CD4-positive, alpha-beta memory T cell (primary cell): ENCODE measurements at regions of chr1 and their contacts with region 1.

Region 1: GRCh38 chr1:158998781-158999161 is 10.9 kb upstream of the IFI16 start:
- DNase-seq: peak; percentile 63 to 72 (median 71)
- H3K4me3 ChIP-seq: no peak overlapping the region
- H3K4me3 Mint-ChIP-seq: peak overlapping the region in 7 of 8 donors; percentile 64 to 89 (median 76)
- H3K27ac ChIP-seq: no peak overlapping the region
- H3K27ac Mint-ChIP-seq: peak overlapping the region in 5 of 7 donors; percentile 24 to 93 (median 93)
- H3K4me1 ChIP-seq: peaks cover 33% of the 10 kb centered on the region
- H3K4me1 Mint-ChIP-seq: peaks cover 32 to 42% (median 37%) of the 10 kb centered on the region in 4 donors
- H3K27me3 ChIP-seq: no peaks in the 10 kb centered on the region
- H3K27me3 Mint-ChIP-seq: no peaks in the 10 kb centered on the region

Region 2: GRCh38 chr1:158203693-158204457 is 794.9 kb before region 1 on chr1:
- CTCF ChIA-PET with region 1: interaction called, 30 read pairs
- POLR2A ChIA-PET with region 1: no interaction called
- intact Hi-C with region 1: loop called (anchors 1 kb)
- DNase-seq: peak in 4 of 5 donors; percentile 31 to 53 (median 36)
- H3K4me3 ChIP-seq: no peak overlapping the region
- H3K4me3 Mint-ChIP-seq: peak overlapping the region in 1 of 8 donors; percentile 43
- H3K27ac ChIP-seq: no peak overlapping the region
- H3K27ac Mint-ChIP-seq: no peak overlapping the region
- H3K4me1 ChIP-seq: peaks cover 10% of the 10 kb centered on the region
- H3K4me1 Mint-ChIP-seq: peaks cover 7 to 11% (median 9%) of the 10 kb centered on the region in 4 donors
- H3K27me3 ChIP-seq: no peaks in the 10 kb centered on the region
- H3K27me3 Mint-ChIP-seq: peaks cover 13 to 19% of the 10 kb centered on the region in 2 donors

Region 3: GRCh38 chr1:158527190-158527815 is 471.5 kb before region 1 on chr1:
- CTCF ChIA-PET with region 1: no interaction called
- POLR2A ChIA-PET with region 1: no interaction called
- intact Hi-C with region 1: loop called (anchors 1 kb)
- DNase-seq: peak in 3 of 5 donors; percentile 3 to 8 (median 6)
- H3K4me3 ChIP-seq: no peak overlapping the region
- H3K4me3 Mint-ChIP-seq: no peak overlapping the region
- H3K27ac ChIP-seq: no peak overlapping the region
- H3K27ac Mint-ChIP-seq: no peak overlapping the region
- H3K4me1 ChIP-seq: no peaks in the 10 kb centered on the region
- H3K4me1 Mint-ChIP-seq: no peaks in the 10 kb centered on the region
- H3K27me3 ChIP-seq: no peaks in the 10 kb centered on the region
- H3K27me3 Mint-ChIP-seq: peaks cover 10 to 15% of the 10 kb centered on the region in 2 donors

Region 4: DNA sequence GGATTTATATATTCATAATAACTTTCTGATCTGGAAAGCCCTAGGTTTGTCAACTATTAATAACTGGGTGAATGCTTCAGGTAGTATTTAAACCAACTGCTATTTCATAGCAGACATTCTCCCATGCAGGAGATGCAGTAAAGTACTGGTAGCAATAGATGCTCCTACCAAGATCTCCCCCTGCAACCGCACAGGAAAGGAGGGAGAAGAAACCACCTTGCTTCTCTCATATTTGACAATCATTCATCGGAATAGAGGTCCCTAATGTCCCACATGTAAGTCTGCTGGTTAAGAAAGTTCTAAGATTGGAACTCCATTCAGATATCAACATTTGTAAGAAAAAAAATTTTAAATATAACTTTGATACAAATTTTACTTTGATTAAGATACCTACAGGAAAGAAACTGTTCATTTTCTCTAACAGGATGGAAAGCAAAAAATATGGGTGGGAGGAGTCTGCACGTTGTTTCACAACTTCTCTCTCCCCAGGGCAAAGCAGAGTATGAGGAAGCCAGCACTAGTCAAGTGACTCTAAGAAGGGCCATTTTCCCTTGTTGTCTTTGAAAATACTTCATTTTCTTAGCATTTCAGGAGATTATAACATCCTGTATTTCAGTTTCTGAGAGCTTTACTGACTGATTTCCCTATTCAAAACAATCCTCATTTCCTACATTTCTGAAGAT is 67.6 kb before region 1 on chr1 and contains the start of gene PYHIN1:
- CTCF ChIA-PET with region 1: interaction called, 3 read pairs
- POLR2A ChIA-PET with region 1: interaction called, 12 read pairs
- intact Hi-C with region 1: loop called (anchors 1 kb)
- DNase-seq: peak; percentile 52 to 67 (median 57)
- H3K4me3 ChIP-seq: peak within 1 kb of the TSS; percentile 50 to 67
- H3K4me3 Mint-ChIP-seq: peak within 1 kb of the TSS; percentile 97 to 100 (median 99)
- H3K27ac ChIP-seq: peak within 1 kb of the TSS; percentile 62
- H3K27ac Mint-ChIP-seq: peak within 1 kb of the TSS; percentile 83 to 98 (median 96)
- H3K4me1 ChIP-seq: peaks cover 40% of the 10 kb centered on the region
- H3K4me1 Mint-ChIP-seq: peaks cover 31 to 52% (median 37%) of the 10 kb centered on the region in 4 donors
- H3K27me3 ChIP-seq: no peaks in the 10 kb centered on the region
- H3K27me3 Mint-ChIP-seq: no peaks in the 10 kb centered on the region
- total RNA-seq, gene PYHIN1: 83.6 to 93.8 TPM

Region 5: DNA sequence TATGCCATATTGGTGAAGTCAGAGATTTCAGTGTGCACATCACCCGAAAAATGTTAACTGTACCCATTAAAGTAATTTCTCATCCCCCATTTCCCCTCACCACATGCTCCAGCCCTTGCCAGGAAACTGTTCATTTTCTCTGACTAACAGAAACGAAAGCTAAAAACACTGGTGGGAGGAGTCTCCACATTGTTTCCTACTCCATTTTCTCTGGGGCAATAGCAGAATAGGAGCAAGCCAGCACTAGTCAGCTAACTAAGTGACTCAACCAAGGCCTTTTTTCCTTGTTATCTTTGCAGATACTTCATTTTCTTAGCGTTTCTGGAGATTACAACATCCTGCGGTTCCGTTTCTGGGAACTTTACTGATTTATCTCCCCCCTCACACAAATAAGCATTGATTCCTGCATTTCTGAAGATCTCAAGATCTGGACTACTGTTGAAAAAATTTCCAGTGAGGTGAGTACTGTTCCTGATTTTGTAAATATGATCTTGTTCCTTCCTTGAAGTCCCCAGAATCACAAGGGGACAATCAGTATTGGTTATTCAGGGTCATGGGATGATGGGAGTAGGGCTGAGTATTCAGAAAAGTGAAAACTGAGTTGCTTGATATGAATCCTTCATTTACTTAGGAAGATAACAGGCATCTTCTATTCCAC is 11.1 kb after region 1 on chr1 and contains the start of gene IFI16:
- CTCF ChIA-PET with region 1: interaction called, 10 read pairs
- POLR2A ChIA-PET with region 1: interaction called, 27 read pairs
- intact Hi-C with region 1: loop called (anchors 1 kb)
- DNase-seq: peak; percentile 70 to 85 (median 77)
- H3K4me3 ChIP-seq: peak within 1 kb of the TSS; percentile 54 to 97
- H3K4me3 Mint-ChIP-seq: peak within 1 kb of the TSS; percentile 89 to 99 (median 97)
- H3K27ac ChIP-seq: peak within 1 kb of the TSS; percentile 88
- H3K27ac Mint-ChIP-seq: peak within 1 kb of the TSS; percentile 87 to 95 (median 93)
- H3K4me1 ChIP-seq: peaks cover 36% of the 10 kb centered on the region
- H3K4me1 Mint-ChIP-seq: peaks cover 40 to 71% (median 46%) of the 10 kb centered on the region in 4 donors
- H3K27me3 ChIP-seq: no peaks in the 10 kb centered on the region
- H3K27me3 Mint-ChIP-seq: no peaks in the 10 kb centered on the region
- total RNA-seq, gene IFI16: 160 to 162 TPM

Region 6: DNA sequence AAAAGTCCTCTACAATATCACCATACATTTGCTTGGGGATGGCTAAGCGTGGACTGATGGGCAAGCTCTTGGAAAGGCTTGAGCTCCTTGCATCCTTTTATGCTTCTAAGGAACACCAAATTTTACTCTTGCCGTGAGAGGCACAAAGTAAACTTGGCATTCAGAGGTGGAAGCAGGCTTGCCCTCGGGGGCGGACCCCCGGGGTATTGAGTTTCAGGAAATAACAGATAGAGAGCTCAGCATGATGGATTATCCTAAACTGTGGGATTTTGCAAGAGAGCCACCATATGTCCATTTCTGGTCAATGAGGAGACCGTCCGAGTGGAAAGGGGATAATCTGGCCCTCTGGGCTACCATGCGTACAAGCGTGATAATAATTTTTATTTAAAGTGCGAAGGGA is 25.0 kb after region 1 on chr1:
- CTCF ChIA-PET with region 1: no interaction called
- POLR2A ChIA-PET with region 1: no interaction called
- intact Hi-C with region 1: no loop called
- DNase-seq: no peak
- H3K4me3 ChIP-seq: no peak overlapping the region
- H3K4me3 Mint-ChIP-seq: peak overlapping the region in 1 of 8 donors; percentile 29
- H3K27ac ChIP-seq: no peak overlapping the region
- H3K27ac Mint-ChIP-seq: peak overlapping the region in 2 of 7 donors; percentile 25 to 69
- H3K4me1 ChIP-seq: peaks cover 90% of the 10 kb centered on the region
- H3K4me1 Mint-ChIP-seq: peaks cover 64 to 86% (median 75%) of the 10 kb centered on the region in 4 donors
- H3K27me3 ChIP-seq: no peaks in the 10 kb centered on the region
- H3K27me3 Mint-ChIP-seq: no peaks in the 10 kb centered on the region

Region 7: DNA sequence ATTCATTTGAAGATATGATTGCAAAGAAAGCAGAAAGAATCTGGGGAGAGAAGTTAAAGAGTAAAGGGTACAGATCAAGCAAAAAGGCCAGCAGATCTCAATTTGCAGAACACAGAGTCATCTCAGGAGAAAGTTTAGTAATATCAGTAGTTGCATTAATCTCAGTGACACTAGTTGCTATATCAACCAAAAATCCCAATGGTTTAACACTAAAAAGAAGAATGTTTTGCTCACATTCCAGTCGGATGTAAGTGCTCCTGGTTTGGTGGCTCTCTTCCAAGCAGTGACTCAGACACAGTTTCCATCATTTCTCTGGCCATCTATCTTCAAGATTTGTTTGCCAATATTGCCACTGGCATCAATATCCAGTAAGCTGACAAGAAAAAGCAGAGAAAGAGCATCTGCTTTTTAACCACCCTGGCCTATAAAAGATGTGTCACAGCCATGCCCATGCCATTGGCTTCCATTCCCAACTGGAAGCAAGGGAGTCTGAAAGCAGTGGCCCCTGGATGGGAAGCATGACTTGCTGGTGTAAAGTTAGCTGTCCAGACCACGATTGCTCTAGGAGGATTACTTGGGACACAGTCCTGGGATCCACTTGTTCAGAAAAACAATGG is 123.3 kb after region 1 on chr1:
- CTCF ChIA-PET with region 1: no interaction called
- POLR2A ChIA-PET with region 1: no interaction called
- intact Hi-C with region 1: no loop called
- DNase-seq: no peak
- H3K4me3 ChIP-seq: no peak overlapping the region
- H3K4me3 Mint-ChIP-seq: no peak overlapping the region
- H3K27ac ChIP-seq: no peak overlapping the region
- H3K27ac Mint-ChIP-seq: no peak overlapping the region
- H3K4me1 ChIP-seq: no peaks in the 10 kb centered on the region
- H3K4me1 Mint-ChIP-seq: no peaks in the 10 kb centered on the region
- H3K27me3 ChIP-seq: no peaks in the 10 kb centered on the region
- H3K27me3 Mint-ChIP-seq: peaks cover 2 to 7% of the 10 kb centered on the region in 2 donors

Region 8: GRCh38 chr1:159854693-159855192 is 856.0 kb after region 1 on chr1:
- CTCF ChIA-PET with region 1: no interaction called
- POLR2A ChIA-PET with region 1: no interaction called
- intact Hi-C with region 1: no loop called
- DNase-seq: peak; percentile 66 to 75 (median 70)
- H3K4me3 ChIP-seq: peak overlapping the region; percentile 42 to 53
- H3K4me3 Mint-ChIP-seq: peak overlapping the region; percentile 83 to 95 (median 89)
- H3K27ac ChIP-seq: peak overlapping the region; percentile 38
- H3K27ac Mint-ChIP-seq: peak overlapping the region; percentile 33 to 93 (median 84)
- H3K4me1 ChIP-seq: peaks cover 14% of the 10 kb centered on the region
- H3K4me1 Mint-ChIP-seq: peaks cover 9 to 25% (median 14%) of the 10 kb centered on the region in 4 donors
- H3K27me3 ChIP-seq: no peaks in the 10 kb centered on the region
- H3K27me3 Mint-ChIP-seq: no peaks in the 10 kb centered on the region